Aorta (tissue), 5 donors: ENCODE measurements at regions of chr4 and their contacts with region 1.

Region 1: DNA sequence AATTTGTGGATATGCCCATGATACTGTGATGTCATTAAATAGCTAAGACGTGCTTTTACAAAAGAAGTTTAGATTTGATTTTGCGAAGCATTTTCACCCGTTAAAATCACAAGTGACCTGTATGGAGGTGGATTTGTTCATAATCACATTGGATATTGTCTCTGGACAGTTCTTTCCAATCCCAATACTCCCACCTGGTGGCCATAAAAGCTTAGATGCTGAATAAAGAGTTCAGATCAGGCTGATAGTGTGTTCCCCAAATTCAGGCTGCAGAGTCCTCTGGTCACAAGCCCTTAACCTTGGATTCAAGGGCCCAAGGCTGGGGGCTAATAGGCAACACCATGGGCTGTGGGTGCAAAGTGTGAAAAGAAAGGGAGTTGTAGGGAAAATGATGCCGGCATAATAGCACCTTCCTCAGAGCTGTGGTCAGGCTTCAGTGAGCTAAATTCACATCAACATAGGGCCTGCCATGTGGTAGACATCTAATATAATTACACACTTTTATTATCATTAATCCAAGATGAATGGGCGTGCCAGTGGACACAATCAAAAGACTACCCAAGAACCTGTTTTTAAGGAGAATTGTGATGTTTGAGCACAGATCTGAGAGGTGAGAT is 28.1 kb downstream of the SMIM43 start:
- DNase-seq: no peak
- ATAC-seq: peak; percentile 60
- H3K4me3 ChIP-seq: no peak overlapping the region
- H3K27ac ChIP-seq: no peak overlapping the region
- H3K4me1 ChIP-seq: no peaks in the 10 kb centered on the region
- H3K27me3 ChIP-seq: no peaks in the 10 kb centered on the region

Region 2: GRCh38 chr4:120927801-120928409 is 808.9 kb before region 1 on chr4:
- intact Hi-C with region 1: no loop called
- DNase-seq: no peak
- ATAC-seq: no peak
- H3K4me3 ChIP-seq: no peak overlapping the region
- H3K27ac ChIP-seq: no peak overlapping the region
- H3K4me1 ChIP-seq: no peaks in the 10 kb centered on the region
- H3K27me3 ChIP-seq: no peaks in the 10 kb centered on the region

Region 3: GRCh38 chr4:121370729-121371325 is 366.0 kb before region 1 on chr4:
- intact Hi-C with region 1: loop called (anchors 5 kb)
- DNase-seq: no peak
- ATAC-seq: no peak
- H3K4me3 ChIP-seq: no peak overlapping the region
- H3K27ac ChIP-seq: no peak overlapping the region
- H3K4me1 ChIP-seq: no peaks in the 10 kb centered on the region
- H3K27me3 ChIP-seq: no peaks in the 10 kb centered on the region

Region 4: GRCh38 chr4:121484633-121485032 is 252.2 kb before region 1 on chr4:
- intact Hi-C with region 1: loop called in 1 of 2 experiments (anchors 10 kb)
- DNase-seq: no peak
- ATAC-seq: peak; percentile 45
- H3K4me3 ChIP-seq: no peak overlapping the region
- H3K27ac ChIP-seq: no peak overlapping the region
- H3K4me1 ChIP-seq: no peaks in the 10 kb centered on the region
- H3K27me3 ChIP-seq: no peaks in the 10 kb centered on the region

Region 5: GRCh38 chr4:121582296-121582695 is 154.5 kb before region 1 on chr4:
- intact Hi-C with region 1: no loop called
- DNase-seq: no peak
- ATAC-seq: no peak
- H3K4me3 ChIP-seq: no peak overlapping the region
- H3K27ac ChIP-seq: no peak overlapping the region
- H3K4me1 ChIP-seq: no peaks in the 10 kb centered on the region
- H3K27me3 ChIP-seq: no peaks in the 10 kb centered on the region

Region 6: DNA sequence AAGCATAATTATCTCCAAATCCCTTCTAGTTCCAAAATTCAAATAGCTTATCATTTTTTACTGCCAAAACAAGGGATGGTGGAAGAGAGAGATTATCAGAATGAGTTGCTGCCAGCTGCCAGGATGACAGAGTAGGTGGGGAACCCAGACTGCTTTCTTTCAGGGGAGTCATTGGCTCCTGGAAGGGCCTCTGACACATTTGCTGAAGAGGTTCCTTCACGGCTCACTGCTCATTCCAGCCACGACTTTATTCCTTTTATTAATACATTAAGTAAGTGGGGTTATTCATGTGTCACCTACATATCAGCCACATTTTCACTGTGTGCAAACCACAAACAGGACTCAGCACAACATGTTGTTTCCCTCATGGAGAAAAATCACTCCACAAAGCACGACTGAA is 40.8 kb after region 1 on chr4:
- intact Hi-C with region 1: no loop called
- DNase-seq: no peak
- ATAC-seq: no peak
- H3K4me3 ChIP-seq: no peak overlapping the region
- H3K27ac ChIP-seq: no peak overlapping the region
- H3K4me1 ChIP-seq: no peaks in the 10 kb centered on the region
- H3K27me3 ChIP-seq: peaks cover 0 to 3% of the 10 kb centered on the region in 2 donors

Region 7: GRCh38 chr4:121913667-121914066 is 176.8 kb after region 1 on chr4:
- intact Hi-C with region 1: no loop called
- DNase-seq: no peak
- ATAC-seq: no peak
- H3K4me3 ChIP-seq: no peak overlapping the region
- H3K27ac ChIP-seq: no peak overlapping the region
- H3K4me1 ChIP-seq: no peaks in the 10 kb centered on the region
- H3K27me3 ChIP-seq: no peaks in the 10 kb centered on the region